Posterior cingulate gyrus (tissue), 11 donors: ENCODE measurements at regions of chr2 and their contacts with region 1.

Region 1: GRCh38 chr2:44955593-44956392 is 14.3 kb downstream of the SIX3 start:
- DNase-seq: peak; percentile 57 to 97 (median 82)

Region 2: DNA sequence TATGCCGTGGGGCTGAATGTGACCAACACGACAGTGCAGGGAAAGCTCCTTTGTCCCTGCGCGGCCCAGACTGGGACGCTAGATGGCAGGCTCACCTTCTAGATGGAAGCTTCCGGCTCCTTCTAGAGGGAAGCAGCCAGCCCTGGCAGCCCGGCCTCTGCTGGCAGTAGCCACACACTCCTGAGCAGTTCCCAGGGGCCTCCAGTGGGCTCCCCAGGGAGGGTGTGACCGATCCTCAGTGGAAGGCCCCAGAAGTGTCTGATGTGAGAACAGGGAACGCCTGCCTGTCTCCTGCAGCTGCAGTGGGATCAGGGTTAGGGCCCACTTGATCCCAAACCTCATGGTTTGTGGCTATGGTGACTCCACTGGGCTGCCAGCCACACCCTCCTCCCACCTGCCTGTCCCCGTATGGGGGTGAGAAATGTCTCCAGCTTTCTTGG is 911.5 kb before region 1 on chr2:
- intact Hi-C with region 1: loop called (anchors 2 kb)
- DNase-seq: peak; percentile 75 to 99 (median 90)

Region 3: GRCh38 chr2:44392338-44392943 is 563.4 kb before region 1 on chr2:
- intact Hi-C with region 1: loop called (anchors 2 kb)
- DNase-seq: peak in 5 of 10 donors; percentile 12 to 48 (median 45)

Region 4: GRCh38 chr2:44479122-44479887 is 476.5 kb before region 1 on chr2:
- intact Hi-C with region 1: loop called (anchors 1 kb)
- DNase-seq: peak in 2 of 10 donors; percentile 4 to 24

Region 5: GRCh38 chr2:45237850-45238542 is 282.2 kb after region 1 on chr2:
- intact Hi-C with region 1: no loop called
- DNase-seq: no peak

Region 6: GRCh38 chr2:45452866-45453265 is 497.1 kb after region 1 on chr2:
- intact Hi-C with region 1: no loop called
- DNase-seq: no peak